ENCODE measurements at regions of chr3 and their contacts with region 1.

Region 1: GRCh38 chr3:73624821-73625665 is at the start of gene PDZRN3:
- DNase-seq: peak; percentile 87
- total RNA-seq, gene PDZRN3: 66.0 TPM

Region 2: DNA sequence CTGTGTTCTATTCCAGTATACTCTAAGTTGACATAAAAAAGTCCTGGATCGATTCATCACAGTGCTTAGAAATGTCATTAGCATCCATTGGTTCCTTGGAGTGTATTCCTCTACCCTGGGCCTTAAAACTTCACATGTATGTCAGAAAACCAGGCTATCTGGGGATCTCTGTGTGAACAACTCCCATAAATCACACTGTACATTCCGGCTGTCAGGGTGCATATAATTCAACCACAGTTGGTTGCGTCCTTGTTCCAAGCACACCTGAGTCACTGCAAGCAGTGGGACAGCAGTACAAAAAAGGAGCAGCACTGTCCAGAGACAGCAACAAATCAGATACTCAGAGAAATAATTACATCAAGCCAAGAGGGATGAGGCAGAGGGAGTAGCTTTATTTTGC is 52.7 kb before region 1 on chr3:
- intact Hi-C with region 1: loop called (anchors 5 kb)
- DNase-seq: no peak

Region 3: DNA sequence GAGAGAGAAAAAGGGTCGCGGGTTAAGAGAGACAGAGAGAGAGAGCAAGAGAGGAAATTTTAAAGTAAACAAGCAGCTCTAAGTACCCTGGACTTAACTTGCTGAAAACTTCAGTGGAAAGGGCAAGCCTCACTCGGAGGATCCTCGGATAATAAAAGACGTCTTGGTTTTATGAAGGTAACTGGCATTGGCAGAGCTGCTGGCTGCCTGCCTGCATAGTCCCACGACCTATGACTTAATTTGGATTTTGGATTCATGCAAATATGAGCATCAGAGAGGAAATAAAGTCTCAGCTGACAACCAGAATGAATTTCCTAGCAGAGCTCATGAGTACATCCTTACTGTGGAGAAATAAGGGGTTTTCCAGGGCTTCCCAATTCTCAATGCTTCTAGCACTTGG is 94.8 kb after region 1 on chr3:
- intact Hi-C with region 1: no loop called
- DNase-seq: no peak

Region 4: GRCh38 chr3:73766599-73767381 is 141.7 kb after region 1 on chr3:
- intact Hi-C with region 1: loop called (anchors 2 kb)
- DNase-seq: no peak

Region 5: GRCh38 chr3:73827725-73828211 is 202.7 kb after region 1 on chr3:
- intact Hi-C with region 1: loop called (anchors 5 kb)
- DNase-seq: no peak

Measured in cardiac septum (tissue), 1 donor.